Tibial artery (tissue), 4 donors: ENCODE measurements at regions of chr1 and their contacts with region 1.

Region 1: DNA sequence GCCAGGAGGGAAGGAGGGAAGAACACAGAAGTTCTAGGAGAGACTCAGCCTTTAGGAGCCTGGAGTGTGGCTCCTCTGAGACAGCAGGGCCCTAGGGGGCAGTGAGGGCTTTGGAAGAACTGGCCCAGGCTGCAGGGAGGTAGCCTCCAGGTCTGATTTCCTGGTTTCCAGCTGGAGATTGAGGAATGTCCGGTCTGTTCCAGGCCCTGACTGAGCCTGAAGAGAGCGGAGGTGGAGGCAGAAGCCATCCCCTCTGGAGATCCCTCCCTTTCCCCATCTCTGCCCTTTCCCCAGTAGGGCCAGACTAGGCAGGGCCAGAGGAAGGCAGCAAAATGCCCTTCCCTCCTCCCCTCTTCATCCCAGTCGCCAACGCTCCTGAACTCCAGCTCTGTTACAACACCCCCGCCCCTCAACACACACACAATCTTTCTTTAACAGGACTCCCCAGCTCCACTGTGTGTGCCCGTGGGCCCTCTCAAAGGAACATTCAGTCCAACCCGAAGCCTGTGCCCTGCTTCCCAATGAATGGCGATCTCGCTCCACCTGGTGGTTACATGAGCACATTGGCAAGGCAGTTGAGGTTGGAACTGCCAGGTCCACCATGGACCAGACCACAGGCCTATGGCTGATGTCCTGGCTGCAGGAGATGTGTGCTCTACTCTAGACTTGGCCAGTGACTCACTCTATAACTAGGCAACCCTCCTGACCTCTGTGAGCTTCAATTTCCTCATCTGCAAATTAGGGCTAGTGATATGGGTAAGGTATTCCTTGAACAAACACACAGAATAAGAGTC is 32.0 kb downstream of the MAP7D1 start:
- DNase-seq: peak; percentile 91 to 94
- H3K4me3 ChIP-seq: no peak overlapping the region
- H3K27ac ChIP-seq: peak overlapping the region; percentile 83 to 85
- H3K4me1 ChIP-seq: peaks cover 4 to 27% (median 13%) of the 10 kb centered on the region in 4 donors
- H3K27me3 ChIP-seq: no peaks in the 10 kb centered on the region
- CTCF ChIP-seq: peak; percentile 86 to 97

Region 2: DNA sequence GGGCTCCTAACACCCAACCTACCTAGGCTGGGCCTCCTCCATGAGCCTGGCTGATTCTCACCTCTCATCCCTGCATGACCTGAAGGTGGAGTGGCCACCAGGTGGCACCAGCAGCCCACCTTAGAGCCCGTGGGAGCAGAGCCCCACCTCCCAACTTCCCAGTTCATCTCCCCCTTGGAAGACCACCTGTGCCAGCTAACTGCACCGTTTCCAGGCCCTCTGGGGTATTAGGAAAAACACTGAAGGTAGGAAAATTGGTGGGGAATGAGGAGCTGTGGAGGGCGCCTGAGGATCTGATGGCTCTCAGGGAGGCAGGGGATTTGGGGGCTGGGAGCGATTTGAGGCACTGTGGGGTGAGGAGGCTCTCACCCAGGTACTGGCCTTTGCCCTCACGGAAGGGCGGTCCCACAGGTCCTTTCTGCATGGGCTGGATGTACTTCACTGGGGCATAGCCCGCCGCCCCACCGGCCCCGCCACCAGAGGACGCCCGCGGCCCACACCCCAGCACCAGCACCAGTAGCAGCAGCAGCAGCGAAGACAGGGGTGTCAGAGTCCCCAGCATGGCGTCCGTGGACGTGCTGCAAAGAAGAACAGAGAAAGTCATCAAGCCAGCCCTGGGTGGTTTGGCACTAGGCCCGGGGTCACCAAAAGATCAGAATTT is 88.2 kb before region 1 on chr1:
- intact Hi-C with region 1: loop called (anchors 5 kb)
- DNase-seq: peak; percentile 73 to 84
- H3K4me3 ChIP-seq: no peak overlapping the region
- H3K27ac ChIP-seq: peak overlapping the region; percentile 50 to 65
- H3K4me1 ChIP-seq: peaks cover 0 to 23% (median 13%) of the 10 kb centered on the region in 4 donors
- H3K27me3 ChIP-seq: no peaks in the 10 kb centered on the region
- CTCF ChIP-seq: peak; percentile 71 to 93

Region 3: DNA sequence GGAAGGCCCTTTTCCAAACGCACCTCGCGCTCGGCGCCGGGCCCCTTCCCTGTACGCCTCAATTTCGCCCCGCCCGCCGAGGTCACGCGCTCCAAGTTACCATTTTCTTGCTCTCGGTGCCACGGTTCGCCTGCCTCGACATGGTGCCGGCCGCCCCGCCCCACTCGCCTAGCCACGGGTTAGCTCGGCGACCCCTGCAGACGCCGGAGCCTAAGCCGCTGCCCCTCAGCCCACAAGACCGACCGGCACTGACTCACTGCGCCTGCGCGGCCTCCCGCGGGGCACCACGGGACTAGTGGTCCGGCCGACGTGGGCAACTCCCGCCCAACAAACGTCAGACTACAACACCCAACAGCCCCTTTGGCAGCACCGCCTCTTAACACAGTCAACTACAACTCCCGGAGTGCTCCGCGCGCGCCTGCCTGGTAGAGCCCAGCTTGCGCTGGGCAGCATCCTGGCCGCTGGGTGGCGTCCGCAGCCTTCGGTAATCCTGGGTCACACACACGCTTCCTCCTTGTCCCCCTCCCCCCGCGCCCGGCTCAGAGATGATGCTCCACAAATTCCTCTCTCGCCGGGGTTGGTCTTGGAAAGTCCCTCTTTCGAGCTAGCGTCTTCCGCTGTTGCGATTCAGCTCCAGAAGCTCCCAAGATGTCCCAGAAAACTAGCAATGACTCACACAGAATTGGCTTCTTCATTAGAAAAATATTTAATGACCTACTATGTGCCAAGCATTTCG is 38.6 kb before region 1 on chr1 and contains the start of gene TRAPPC3:
- intact Hi-C with region 1: loop called (anchors 5 kb)
- DNase-seq: peak; percentile 100
- H3K4me3 ChIP-seq: peak within 1 kb of the TSS; percentile 84 to 93
- H3K27ac ChIP-seq: peak within 1 kb of the TSS; percentile 89 to 100
- H3K4me1 ChIP-seq: peaks cover 0 to 61% (median 34%) of the 10 kb centered on the region in 4 donors
- H3K27me3 ChIP-seq: no peaks in the 10 kb centered on the region
- CTCF ChIP-seq: peak; percentile 88 to 98

Region 4: GRCh38 chr1:36397378-36398230 is 209.6 kb after region 1 on chr1 and contains the start of gene LSM10:
- intact Hi-C with region 1: no loop called
- DNase-seq: peak; percentile 92 to 96
- H3K4me3 ChIP-seq: peak within 1 kb of the TSS; percentile 78 to 89
- H3K27ac ChIP-seq: peak within 1 kb of the TSS; percentile 92 to 96
- H3K4me1 ChIP-seq: peaks cover 0 to 22% (median 16%) of the 10 kb centered on the region in 4 donors
- H3K27me3 ChIP-seq: no peaks in the 10 kb centered on the region
- CTCF ChIP-seq: no peak

Region 5: GRCh38 chr1:36542962-36543515 is 355.0 kb after region 1 on chr1:
- intact Hi-C with region 1: no loop called
- DNase-seq: peak in 1 of 2 donors; percentile 28
- H3K4me3 ChIP-seq: no peak overlapping the region
- H3K27ac ChIP-seq: no peak overlapping the region
- H3K4me1 ChIP-seq: no peaks in the 10 kb centered on the region
- H3K27me3 ChIP-seq: peaks cover 0 to 24% of the 10 kb centered on the region in 2 donors
- CTCF ChIP-seq: no peak